ENCODE measurements at regions of chr17 and their contacts with region 1.

Region 1: DNA sequence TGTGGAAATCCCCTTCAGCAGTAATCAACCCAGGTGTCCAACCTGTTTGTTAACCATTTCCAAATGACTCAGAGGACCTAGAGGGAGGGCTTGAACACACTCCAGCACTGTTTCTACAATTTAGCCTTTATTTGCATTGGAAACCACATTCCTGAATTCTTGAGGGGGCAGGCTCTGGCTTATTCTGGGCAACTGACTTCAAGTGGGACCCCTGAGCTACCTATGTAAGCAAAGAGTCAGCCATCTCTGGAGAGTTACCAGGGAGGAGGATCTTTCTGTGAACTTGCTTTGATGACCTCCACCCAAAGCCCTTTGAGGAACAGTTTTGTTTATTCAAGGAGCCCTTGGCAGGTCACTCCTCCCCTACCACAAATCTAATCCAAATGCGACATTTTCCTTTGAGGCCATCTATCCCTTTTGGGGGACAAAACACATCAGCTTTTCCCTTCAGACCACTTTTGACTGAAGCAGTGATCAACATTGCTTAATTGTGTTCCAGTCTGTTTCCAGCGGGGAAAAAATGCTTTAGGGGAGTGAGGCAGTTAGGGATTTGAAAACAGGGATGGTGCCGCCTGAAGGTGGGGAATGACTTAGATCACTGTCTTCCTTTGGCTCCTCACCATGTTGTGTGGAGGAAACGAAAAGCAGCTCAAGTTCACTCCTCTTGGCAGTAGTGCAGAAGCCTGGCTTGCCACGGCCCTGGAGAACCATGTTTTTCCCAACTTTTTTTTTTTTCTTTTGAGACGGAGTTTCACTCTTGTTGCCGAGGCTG is 46.2 kb downstream of the TUBD1 start:
- DNase-seq: peak; percentile 77
- ATAC-seq: peak; percentile 73
- H3K4me3 ChIP-seq: no peak overlapping the region
- H3K4me3 Mint-ChIP-seq: peak overlapping the region; percentile 63
- H3K27ac ChIP-seq: peak overlapping the region; percentile 62 to 85
- H3K27ac Mint-ChIP-seq: peak overlapping the region; percentile 78
- H3K4me1 ChIP-seq: peaks cover 42 to 49% of the 10 kb centered on the region in 2 donors
- H3K4me1 Mint-ChIP-seq: peaks cover 60% of the 10 kb centered on the region
- H3K27me3 ChIP-seq: no peaks in the 10 kb centered on the region
- H3K27me3 Mint-ChIP-seq: no peaks in the 10 kb centered on the region
- CTCF ChIP-seq: no peak

Region 2: GRCh38 chr17:59641799-59642489 is 204.6 kb before region 1 on chr17:
- CTCF ChIA-PET with region 1: no interaction called
- POLR2A ChIA-PET with region 1: no interaction called
- intact Hi-C with region 1: no loop called
- DNase-seq: peak; percentile 80
- ATAC-seq: peak; percentile 88
- H3K4me3 ChIP-seq: peak overlapping the region in 3 of 5 experiments; percentile 8 to 43 (median 12)
- H3K4me3 Mint-ChIP-seq: peak overlapping the region; percentile 79
- H3K27ac ChIP-seq: peak overlapping the region; percentile 17 to 71
- H3K27ac Mint-ChIP-seq: peak overlapping the region; percentile 81
- H3K4me1 ChIP-seq: peaks cover 48 to 53% of the 10 kb centered on the region in 2 donors
- H3K4me1 Mint-ChIP-seq: peaks cover 68% of the 10 kb centered on the region
- H3K27me3 ChIP-seq: no peaks in the 10 kb centered on the region
- H3K27me3 Mint-ChIP-seq: no peaks in the 10 kb centered on the region
- CTCF ChIP-seq: no peak

Region 3: DNA sequence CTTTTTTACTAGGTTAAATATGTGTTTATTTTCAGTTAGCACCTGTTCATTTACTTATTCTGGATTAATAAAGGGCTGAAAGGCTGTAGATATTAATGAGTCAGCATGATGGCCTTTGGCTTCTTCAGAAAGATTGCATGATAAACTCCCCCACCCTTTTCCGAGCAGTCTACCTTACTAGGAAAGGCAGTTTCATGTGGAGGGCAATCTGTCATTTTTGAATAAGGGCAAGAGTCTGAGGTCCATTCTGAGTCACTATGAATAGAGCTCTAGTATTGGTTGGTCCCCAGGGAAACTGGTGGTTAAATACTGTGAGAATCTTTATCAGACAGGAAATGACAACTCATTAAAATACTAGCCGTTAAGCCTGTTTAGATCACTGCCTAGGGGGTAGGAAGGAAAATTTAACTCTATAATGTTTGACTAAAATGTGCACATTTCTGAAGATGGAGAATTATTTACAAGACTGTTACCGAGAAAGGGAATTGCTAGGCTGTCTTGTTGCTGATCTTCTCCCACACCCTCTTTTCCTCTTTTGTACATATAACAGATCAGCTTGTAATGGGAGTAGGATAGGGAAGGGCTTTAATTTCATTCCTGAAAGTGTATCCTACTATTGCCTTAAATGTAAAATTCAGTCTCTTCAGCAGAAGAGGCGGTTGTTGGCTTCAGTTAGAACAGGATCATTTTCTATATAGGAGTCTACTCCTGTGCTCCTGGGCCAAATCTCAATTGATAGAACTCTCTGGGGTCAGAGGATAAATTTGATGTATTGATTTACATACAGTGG is 17.2 kb before region 1 on chr17:
- CTCF ChIA-PET with region 1: interaction called, 8 read pairs
- POLR2A ChIA-PET with region 1: interaction called, 3 read pairs
- intact Hi-C with region 1: loop called (anchors 1 kb)
- DNase-seq: peak; percentile 77
- ATAC-seq: peak; percentile 88
- H3K4me3 ChIP-seq: peak overlapping the region in 1 of 5 experiments; percentile 21
- H3K4me3 Mint-ChIP-seq: peak overlapping the region; percentile 72
- H3K27ac ChIP-seq: peak overlapping the region in 1 of 2 donors; percentile 27
- H3K27ac Mint-ChIP-seq: peak overlapping the region; percentile 79
- H3K4me1 ChIP-seq: peaks cover 44 to 59% of the 10 kb centered on the region in 2 donors
- H3K4me1 Mint-ChIP-seq: peaks cover 72% of the 10 kb centered on the region
- H3K27me3 ChIP-seq: no peaks in the 10 kb centered on the region
- H3K27me3 Mint-ChIP-seq: no peaks in the 10 kb centered on the region
- CTCF ChIP-seq: no peak

Measured in B cell (primary cell).